ENCODE measurements at regions of chr5 and their contacts with region 1.

Region 1: DNA sequence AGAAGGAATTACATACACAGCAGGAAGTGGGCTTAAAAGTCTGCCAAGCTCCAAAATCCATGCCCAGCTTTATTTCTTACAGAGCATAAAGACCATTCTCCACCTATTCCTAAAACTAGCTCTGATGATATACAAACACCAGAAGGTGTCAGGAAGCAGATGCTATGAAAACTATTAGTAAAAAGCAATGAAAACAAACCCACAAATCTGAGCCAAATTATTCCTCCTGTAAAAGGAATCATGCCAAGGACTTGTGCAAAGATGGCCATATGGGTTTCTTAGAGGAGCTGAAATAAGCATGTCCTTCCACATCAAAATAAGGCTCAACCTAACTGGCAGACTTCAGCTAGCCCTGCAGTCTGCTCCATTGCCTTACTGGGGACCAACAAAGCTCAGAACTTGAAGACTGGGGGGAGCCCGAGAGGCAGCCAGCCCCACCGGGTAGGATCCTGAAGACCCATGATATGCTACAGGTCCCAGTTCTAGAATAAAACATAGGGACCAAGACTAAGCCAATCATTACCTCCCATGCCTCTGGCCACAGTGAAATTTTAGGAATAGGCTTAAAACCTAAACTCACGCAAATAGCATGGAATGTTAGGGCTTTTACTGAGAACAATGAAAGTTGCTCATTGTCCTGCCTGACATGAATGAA is 42.8 kb upstream of the GABRP start:
- DNase-seq: no peak

Region 2: DNA sequence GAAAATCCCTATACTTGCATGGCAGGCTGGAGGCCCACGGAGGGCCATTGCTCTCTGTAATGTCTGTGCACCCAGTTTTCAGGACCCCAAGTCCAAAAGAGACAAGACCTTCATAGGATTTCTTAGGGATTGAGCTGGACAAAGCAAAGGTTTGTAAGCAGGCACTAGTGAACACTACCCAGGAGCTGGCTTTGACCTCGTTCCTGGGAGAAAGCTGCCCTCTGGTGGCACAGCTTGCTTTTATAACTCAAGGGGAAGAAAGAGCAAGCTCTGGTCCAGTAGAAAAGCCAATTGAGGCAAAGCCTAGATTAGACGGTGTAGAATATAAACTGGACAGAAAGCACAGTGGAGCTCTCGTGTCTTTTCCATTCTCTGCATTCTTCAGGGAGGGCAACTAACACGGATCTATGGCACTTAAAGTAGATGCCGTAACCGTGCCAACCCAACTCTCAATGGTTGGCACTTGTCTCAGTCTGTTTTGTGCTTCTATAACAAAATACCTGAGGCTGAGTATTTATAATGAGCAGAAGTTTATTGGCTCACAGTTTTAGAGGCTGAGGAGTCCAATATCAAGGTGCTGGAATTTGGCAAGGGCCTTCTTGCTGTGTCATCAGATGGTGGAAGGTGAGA is 50.8 kb after region 1 on chr5:
- intact Hi-C with region 1: loop called (anchors 1 kb)
- DNase-seq: peak in 7 of 10 donors; percentile 35 to 93 (median 67)

Region 3: DNA sequence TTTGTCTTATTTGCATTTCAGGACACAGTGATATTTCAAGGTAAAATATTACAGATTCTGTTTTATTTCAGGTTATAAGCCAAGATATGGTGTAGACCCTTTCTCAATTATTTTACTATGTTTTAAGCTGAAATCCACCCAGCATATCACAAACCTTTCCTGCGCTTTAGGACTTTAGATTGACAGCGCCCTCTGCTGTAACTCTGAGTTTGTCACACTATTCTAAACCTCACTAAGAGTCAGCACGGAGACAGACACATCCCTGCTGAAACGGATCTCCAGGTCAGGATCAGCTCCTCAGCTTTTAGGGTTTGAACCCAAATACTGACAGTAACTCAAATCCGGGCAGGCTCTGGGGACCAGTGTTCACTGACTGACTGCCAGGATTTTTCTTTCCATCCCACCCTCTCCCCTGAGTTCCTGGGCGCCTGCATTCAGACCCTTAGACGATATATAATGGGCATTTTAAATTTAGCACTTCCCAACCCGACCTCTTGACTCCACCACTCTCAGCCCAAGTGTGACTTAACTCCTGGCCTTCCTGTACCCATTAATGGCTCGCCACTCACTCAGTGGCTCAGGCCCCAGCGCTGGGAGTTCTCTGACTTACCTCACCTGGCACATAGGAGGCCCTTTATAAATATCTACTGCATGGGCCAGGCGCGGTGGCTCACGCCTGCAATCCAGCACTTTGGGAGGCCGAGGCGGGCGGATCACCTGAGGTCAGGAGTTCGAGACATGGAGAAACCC is 601.9 kb after region 1 on chr5:
- intact Hi-C with region 1: loop called (anchors 5 kb)
- DNase-seq: peak in 4 of 10 donors; percentile 16 to 75 (median 34)